ENCODE measurements at regions of chr3 and their contacts with region 1.

Region 1: GRCh38 chr3:54593653-54594052 is 334.2 kb downstream of the LRTM1 start:
- DNase-seq: no peak
- H3K4me3 ChIP-seq: no peak overlapping the region
- H3K27ac ChIP-seq: no peak overlapping the region
- H3K4me1 ChIP-seq: no peaks in the 10 kb centered on the region
- H3K27me3 ChIP-seq: no peaks in the 10 kb centered on the region
- CTCF ChIP-seq: no peak

Region 2: GRCh38 chr3:54384279-54384678 is 209.4 kb before region 1 on chr3:
- CTCF ChIA-PET with region 1: no interaction called
- dilution Hi-C with region 1: no loop called
- in situ Hi-C with region 1: no loop called
- intact Hi-C with region 1: no loop called
- DNase-seq: no peak
- H3K4me3 ChIP-seq: no peak overlapping the region
- H3K27ac ChIP-seq: no peak overlapping the region
- H3K4me1 ChIP-seq: no peaks in the 10 kb centered on the region
- H3K27me3 ChIP-seq: no peaks in the 10 kb centered on the region
- CTCF ChIP-seq: no peak

Region 3: DNA sequence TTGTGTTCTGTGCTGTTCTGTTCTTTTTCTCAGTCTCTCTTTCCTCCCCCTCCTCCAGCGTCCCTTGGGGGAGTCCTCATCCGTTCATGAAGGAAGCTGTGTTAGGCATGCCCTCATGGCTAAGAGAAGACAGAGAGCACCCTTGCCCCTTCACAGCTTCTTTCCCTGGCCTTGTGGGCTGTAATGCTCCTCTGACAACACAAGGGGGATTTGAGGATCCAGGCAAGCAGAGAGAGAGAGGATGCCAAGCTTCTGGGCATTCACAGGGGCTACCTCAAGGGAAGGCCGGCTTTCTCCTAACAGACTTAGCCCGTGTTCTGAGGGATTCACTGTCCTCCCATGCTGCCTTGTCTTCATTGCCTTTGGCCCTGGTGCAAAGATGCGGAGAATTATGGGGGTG is 55.3 kb before region 1 on chr3:
- CTCF ChIA-PET with region 1: interaction called, 10 read pairs
- dilution Hi-C with region 1: no loop called
- in situ Hi-C with region 1: no loop called
- intact Hi-C with region 1: no loop called
- DNase-seq: peak; percentile 7
- H3K4me3 ChIP-seq: no peak overlapping the region
- H3K27ac ChIP-seq: no peak overlapping the region
- H3K4me1 ChIP-seq: no peaks in the 10 kb centered on the region
- H3K27me3 ChIP-seq: no peaks in the 10 kb centered on the region
- CTCF ChIP-seq: peak; percentile 34 to 38

Measured in mammary epithelial cell (primary cell).